IMR-90 (cell line): ENCODE measurements at regions of chr7 and their contacts with region 1.

Region 1: DNA sequence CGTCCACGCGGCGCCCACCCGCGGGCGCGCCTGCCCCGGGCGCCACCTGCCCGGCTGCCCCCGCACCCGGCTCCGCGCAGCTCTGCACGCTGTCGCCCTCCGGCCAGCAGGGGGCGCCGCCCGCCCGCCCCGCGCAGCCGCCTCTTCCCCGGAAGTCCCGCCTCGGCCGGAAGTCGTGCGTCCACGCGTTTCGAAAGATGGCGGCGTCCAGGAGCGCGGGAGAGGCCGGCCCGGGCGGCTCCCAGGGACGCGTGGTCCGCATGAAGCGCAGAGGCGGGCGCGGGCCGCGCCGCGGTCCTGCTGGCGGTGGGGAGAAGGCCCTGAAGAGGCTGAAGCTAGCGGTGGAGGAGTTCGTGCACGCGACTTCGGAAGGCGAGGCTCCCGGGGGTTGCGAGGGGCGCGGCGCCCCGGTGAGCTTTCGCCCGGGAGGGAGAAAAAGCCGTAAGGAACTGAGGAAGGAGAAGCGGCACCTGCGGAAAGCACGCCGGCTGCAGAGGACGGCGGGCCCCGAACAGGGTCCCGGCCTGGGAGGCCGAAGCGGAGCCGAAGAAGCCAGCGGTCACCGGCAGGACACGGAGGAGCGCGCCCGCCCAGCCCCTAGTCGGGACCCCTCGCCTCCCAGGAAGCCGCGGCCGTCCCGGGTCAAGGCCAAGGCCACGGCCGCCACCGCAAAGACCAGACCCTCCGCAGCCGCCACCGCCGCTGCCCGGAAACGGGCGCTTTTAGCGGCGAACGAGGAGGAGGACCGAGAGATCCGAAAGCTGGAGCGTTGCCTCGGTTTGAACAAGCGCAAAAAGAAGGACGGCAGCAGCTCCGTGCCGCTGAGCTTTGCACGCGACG is at the start of gene NOM1:
- DNase-seq: peak; percentile 74
- ATAC-seq: peak; percentile 84
- H3K4me3 ChIP-seq: peak within 1 kb of the TSS; percentile 96
- H3K27ac ChIP-seq: peak within 1 kb of the TSS; percentile 79
- H3K4me1 ChIP-seq: peaks cover 2% of the 10 kb centered on the region; the same call in 1 of the 2 replicates
- H3K27me3 ChIP-seq: peaks cover 3% of the 10 kb centered on the region; the same call in 1 of the 2 replicates
- CTCF ChIP-seq: peak; percentile 94
- POLR2A ChIP-seq: peak; percentile 86
- RAD21 ChIP-seq: peak; percentile 46
- total RNA-seq, gene NOM1: 15.4 and 16.4 TPM in 2 replicates

Region 2: GRCh38 chr7:155796381-155797261 is 1153.1 kb before region 1 on chr7:
- CTCF ChIA-PET with region 1: no interaction called
- POLR2A ChIA-PET with region 1: no interaction called
- dilution Hi-C with region 1: no loop called
- in situ Hi-C with region 1: no loop called
- intact Hi-C with region 1: loop called (anchors 1 kb)
- DNase-seq: no peak
- ATAC-seq: peak; percentile 96
- H3K4me3 ChIP-seq: no peak overlapping the region
- H3K27ac ChIP-seq: no peak overlapping the region
- H3K4me1 ChIP-seq: peaks cover 2% of the 10 kb centered on the region; the same call in 1 of the 2 replicates
- H3K27me3 ChIP-seq: peaks cover 36% of the 10 kb centered on the region
- CTCF ChIP-seq: peak; percentile 85
- POLR2A ChIP-seq: no peak
- RAD21 ChIP-seq: peak; percentile 89

Region 3: DNA sequence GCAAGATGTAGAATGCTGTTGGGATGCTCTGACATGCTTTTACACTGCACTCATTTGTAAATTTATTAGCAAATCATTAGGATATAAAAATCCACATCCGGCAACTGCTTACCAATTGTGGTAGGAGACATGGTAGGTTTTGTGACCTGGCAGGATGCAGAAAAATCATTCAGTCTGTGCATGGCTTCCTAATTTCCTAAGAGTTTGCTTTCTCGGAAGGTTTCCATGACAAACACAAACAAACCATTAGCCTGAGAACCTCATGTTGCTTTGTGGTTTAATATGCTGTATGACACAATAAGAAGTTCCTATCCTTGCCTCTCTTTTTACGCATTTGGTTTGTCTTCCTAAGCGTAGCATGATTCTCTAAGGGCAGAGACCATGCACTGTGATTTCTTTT is 42.1 kb before region 1 on chr7:
- CTCF ChIA-PET with region 1: no interaction called
- POLR2A ChIA-PET with region 1: no interaction called
- dilution Hi-C with region 1: no loop called
- in situ Hi-C with region 1: no loop called
- intact Hi-C with region 1: loop called (anchors 2 kb)
- DNase-seq: no peak
- ATAC-seq: no peak
- H3K4me3 ChIP-seq: no peak overlapping the region
- H3K27ac ChIP-seq: no peak overlapping the region
- H3K4me1 ChIP-seq: no peaks in the 10 kb centered on the region; the same call in 1 of the 2 replicates
- H3K27me3 ChIP-seq: no peaks in the 10 kb centered on the region
- CTCF ChIP-seq: no peak
- POLR2A ChIP-seq: no peak
- RAD21 ChIP-seq: no peak

Region 4: GRCh38 chr7:157138424-157139110 is 188.8 kb after region 1 on chr7 and contains the start of gene UBE3C:
- CTCF ChIA-PET with region 1: interaction called, 3 read pairs
- POLR2A ChIA-PET with region 1: no interaction called
- dilution Hi-C with region 1: no loop called
- in situ Hi-C with region 1: loop called (anchors 25 kb)
- intact Hi-C with region 1: no loop called
- DNase-seq: peak; percentile 90
- ATAC-seq: peak; percentile 89
- H3K4me3 ChIP-seq: peak within 1 kb of the TSS; percentile 59
- H3K27ac ChIP-seq: peak within 1 kb of the TSS; percentile 89
- H3K4me1 ChIP-seq: peaks cover 11% of the 10 kb centered on the region
- H3K27me3 ChIP-seq: no peaks in the 10 kb centered on the region
- CTCF ChIP-seq: no peak
- POLR2A ChIP-seq: peak; percentile 70
- RAD21 ChIP-seq: no peak
- total RNA-seq, gene UBE3C: 60.6 and 88.6 TPM in 2 replicates

Region 5: GRCh38 chr7:157177983-157178381 is 228.2 kb after region 1 on chr7:
- CTCF ChIA-PET with region 1: no interaction called
- POLR2A ChIA-PET with region 1: no interaction called
- dilution Hi-C with region 1: no loop called
- in situ Hi-C with region 1: no loop called
- intact Hi-C with region 1: no loop called
- DNase-seq: no peak
- ATAC-seq: no peak
- H3K4me3 ChIP-seq: no peak overlapping the region
- H3K27ac ChIP-seq: no peak overlapping the region
- H3K4me1 ChIP-seq: no peaks in the 10 kb centered on the region
- H3K27me3 ChIP-seq: no peaks in the 10 kb centered on the region
- CTCF ChIP-seq: no peak
- POLR2A ChIP-seq: no peak
- RAD21 ChIP-seq: no peak

Region 6: GRCh38 chr7:157273208-157274093 is 323.7 kb after region 1 on chr7:
- CTCF ChIA-PET with region 1: no interaction called
- POLR2A ChIA-PET with region 1: no interaction called
- dilution Hi-C with region 1: no loop called
- in situ Hi-C with region 1: loop called (anchors 25 kb)
- intact Hi-C with region 1: no loop called
- DNase-seq: peak; percentile 74
- ATAC-seq: peak; percentile 73
- H3K4me3 ChIP-seq: no peak overlapping the region
- H3K27ac ChIP-seq: peak overlapping the region; percentile 93
- H3K4me1 ChIP-seq: peaks cover 22% of the 10 kb centered on the region
- H3K27me3 ChIP-seq: no peaks in the 10 kb centered on the region
- CTCF ChIP-seq: peak; percentile 96
- POLR2A ChIP-seq: no peak
- RAD21 ChIP-seq: peak; percentile 91

Region 7: GRCh38 chr7:157336383-157337315 is 386.9 kb after region 1 on chr7 and contains the start of gene DNAJB6:
- CTCF ChIA-PET with region 1: no interaction called
- POLR2A ChIA-PET with region 1: no interaction called
- dilution Hi-C with region 1: no loop called
- in situ Hi-C with region 1: no loop called
- intact Hi-C with region 1: loop called (anchors 10 kb)
- DNase-seq: peak; percentile 90
- ATAC-seq: peak; percentile 85
- H3K4me3 ChIP-seq: peak within 1 kb of the TSS; percentile 96
- H3K27ac ChIP-seq: peak within 1 kb of the TSS; percentile 96
- H3K4me1 ChIP-seq: peaks cover 10% of the 10 kb centered on the region
- H3K27me3 ChIP-seq: no peaks in the 10 kb centered on the region
- CTCF ChIP-seq: no peak
- POLR2A ChIP-seq: peak; percentile 85
- RAD21 ChIP-seq: no peak
- total RNA-seq, gene DNAJB6: 93.4 and 155 TPM in 2 replicates

Region 8: GRCh38 chr7:157386979-157387800 is 437.4 kb after region 1 on chr7:
- CTCF ChIA-PET with region 1: no interaction called
- POLR2A ChIA-PET with region 1: no interaction called
- dilution Hi-C with region 1: no loop called
- in situ Hi-C with region 1: loop called (anchors 25 kb)
- intact Hi-C with region 1: no loop called
- DNase-seq: peak; percentile 86
- ATAC-seq: peak; percentile 88
- H3K4me3 ChIP-seq: no peak overlapping the region
- H3K27ac ChIP-seq: peak overlapping the region; percentile 10; the same call in 1 of the 2 replicates
- H3K4me1 ChIP-seq: no peaks in the 10 kb centered on the region
- H3K27me3 ChIP-seq: no peaks in the 10 kb centered on the region
- CTCF ChIP-seq: peak; percentile 88
- POLR2A ChIP-seq: no peak
- RAD21 ChIP-seq: peak; percentile 53

Region 9: DNA sequence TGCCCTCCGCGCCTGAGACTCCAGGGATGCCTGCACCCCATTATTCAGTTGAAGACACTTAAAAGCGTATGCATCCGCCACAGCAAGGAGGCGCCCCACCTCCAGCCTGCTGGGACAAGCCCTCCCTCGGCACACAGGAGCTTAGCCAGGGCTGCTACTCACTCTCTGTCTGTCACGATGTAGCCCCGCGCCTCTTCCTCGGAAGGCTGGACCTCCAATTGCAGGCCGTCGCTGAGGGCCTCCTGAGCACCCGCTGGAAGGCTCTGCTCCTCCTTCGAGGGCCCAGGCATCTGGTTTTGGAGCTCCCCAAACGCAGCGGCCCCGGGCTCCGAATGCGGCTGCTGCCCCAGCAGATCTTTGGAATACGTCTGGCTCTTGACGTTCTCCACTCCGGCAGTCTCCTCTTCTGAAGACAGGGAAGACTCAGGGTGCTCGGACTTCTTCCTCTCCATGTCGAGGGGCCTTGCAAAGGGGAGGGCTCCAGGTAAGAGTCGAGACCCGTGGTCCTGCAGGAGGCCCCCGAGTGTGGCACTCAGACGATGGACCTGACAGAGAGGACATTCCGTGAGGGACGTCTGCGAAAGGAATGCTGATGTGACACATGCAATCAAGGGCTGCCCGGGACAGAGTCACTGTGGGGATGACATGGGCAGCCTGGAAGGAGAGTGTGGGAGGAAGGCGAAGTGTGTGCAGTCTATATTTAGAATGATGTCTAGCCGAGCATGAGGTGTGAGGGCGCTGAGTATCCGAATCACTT is 1183.9 kb after region 1 on chr7:
- CTCF ChIA-PET with region 1: no interaction called
- POLR2A ChIA-PET with region 1: no interaction called
- dilution Hi-C with region 1: no loop called
- in situ Hi-C with region 1: no loop called
- intact Hi-C with region 1: no loop called
- DNase-seq: no peak
- ATAC-seq: no peak
- H3K4me3 ChIP-seq: no peak overlapping the region
- H3K27ac ChIP-seq: no peak overlapping the region
- H3K4me1 ChIP-seq: no peaks in the 10 kb centered on the region
- H3K27me3 ChIP-seq: no peaks in the 10 kb centered on the region
- CTCF ChIP-seq: no peak
- POLR2A ChIP-seq: no peak
- RAD21 ChIP-seq: no peak